ENCODE measurements at regions of chr2 and their contacts with region 1.

Region 1: DNA sequence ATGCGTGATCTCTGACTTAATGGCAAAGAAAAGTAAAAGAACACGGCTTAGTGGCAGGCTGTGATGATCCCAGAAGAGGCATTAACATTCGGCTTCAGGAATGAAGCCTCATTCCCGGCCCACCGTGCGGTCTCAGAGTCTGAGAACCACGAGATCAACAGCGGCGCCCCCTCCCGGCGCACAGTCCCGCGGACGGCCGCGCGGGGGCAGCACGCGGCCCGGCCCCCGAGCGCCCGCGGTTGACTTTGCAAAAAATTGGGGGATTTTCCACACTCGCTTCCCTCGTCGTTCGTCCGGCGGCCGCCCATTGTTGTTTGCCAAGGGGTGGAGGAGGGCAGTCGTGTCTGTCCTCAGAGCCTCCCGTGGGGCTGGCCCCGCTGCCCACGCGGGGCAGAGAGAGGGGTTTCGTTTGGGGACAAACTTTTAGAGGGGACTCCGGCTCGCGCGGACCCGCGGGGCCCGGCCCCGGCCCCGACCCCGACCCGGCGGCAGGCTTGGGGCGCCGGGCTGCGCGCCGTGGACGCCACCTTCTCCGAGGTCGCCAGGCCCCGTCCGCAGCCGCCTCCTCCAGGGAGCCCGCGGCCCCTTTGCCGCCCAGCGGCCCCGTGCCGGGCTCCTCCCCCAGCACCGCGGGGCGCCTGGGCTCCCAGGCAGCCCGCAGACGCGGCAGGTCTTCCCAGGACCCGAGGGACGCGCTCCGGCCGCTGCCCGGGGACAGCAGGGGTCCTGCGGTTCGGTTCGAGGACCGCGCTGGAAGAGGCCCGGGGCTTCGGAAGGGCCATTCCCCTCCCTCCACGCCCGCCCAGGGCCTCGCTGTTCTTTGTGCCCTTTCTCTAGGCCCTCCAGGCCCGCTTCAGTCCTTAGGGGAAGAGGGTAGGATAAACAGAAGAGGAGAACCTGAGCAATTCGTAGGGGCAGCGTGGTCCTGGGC is 3.4 kb upstream of the HS6ST1 start:
- DNase-seq: peak; percentile 79
- H3K4me3 Mint-ChIP-seq: peak overlapping the region; percentile 76
- H3K27ac Mint-ChIP-seq: peak overlapping the region; percentile 23
- H3K4me1 Mint-ChIP-seq: peaks cover 6% of the 10 kb centered on the region
- H3K27me3 Mint-ChIP-seq: peaks cover 6% of the 10 kb centered on the region

Region 2: DNA sequence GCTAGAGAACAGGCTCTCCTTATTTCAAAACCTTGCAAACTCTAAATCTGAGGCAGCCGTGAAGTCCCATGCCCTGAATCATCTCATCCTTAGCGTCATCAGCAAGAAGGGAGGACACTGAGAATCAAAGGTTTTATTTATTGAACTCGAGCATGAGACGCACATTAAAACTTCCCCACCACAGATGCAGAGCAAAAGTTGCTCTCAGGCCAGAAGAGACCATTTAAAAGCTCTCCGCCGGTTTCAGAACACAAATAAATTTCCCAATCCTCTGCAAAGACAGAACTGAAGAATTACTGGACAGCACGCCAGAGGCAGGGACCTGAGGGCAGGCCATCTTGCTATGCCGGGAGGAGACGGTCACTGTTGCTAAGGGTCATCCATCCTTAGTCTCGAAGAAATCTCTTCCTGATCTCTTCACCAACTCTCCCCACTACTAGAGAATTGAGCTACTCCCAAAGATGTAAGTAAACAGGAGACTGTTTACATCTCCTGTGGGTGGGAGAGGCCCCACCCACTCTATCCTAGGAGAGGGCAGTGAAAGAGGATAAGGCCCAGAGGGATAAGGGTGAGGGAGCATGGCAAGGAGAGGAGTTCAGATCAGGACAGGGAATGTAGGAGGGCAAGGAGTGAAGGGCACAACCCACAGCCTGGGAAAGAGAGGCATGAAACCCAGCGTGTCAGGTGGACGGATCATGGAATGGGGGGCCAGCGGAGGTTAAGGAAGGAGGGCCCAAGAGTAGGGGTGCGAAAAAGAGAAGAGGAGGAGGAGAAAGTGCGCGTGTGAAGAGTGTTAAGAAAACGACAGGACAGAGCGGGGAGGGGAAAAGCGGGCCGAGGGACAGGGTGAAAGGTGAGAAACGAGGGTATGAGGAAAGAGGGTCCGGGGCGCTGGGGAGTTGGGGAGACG is 437.4 kb before region 1 on chr2:
- intact Hi-C with region 1: loop called (anchors 10 kb)
- DNase-seq: no peak
- H3K4me3 Mint-ChIP-seq: peak overlapping the region; percentile 98
- H3K27ac Mint-ChIP-seq: peak overlapping the region; percentile 95
- H3K4me1 Mint-ChIP-seq: peaks cover 45% of the 10 kb centered on the region
- H3K27me3 Mint-ChIP-seq: no peaks in the 10 kb centered on the region

Region 3: DNA sequence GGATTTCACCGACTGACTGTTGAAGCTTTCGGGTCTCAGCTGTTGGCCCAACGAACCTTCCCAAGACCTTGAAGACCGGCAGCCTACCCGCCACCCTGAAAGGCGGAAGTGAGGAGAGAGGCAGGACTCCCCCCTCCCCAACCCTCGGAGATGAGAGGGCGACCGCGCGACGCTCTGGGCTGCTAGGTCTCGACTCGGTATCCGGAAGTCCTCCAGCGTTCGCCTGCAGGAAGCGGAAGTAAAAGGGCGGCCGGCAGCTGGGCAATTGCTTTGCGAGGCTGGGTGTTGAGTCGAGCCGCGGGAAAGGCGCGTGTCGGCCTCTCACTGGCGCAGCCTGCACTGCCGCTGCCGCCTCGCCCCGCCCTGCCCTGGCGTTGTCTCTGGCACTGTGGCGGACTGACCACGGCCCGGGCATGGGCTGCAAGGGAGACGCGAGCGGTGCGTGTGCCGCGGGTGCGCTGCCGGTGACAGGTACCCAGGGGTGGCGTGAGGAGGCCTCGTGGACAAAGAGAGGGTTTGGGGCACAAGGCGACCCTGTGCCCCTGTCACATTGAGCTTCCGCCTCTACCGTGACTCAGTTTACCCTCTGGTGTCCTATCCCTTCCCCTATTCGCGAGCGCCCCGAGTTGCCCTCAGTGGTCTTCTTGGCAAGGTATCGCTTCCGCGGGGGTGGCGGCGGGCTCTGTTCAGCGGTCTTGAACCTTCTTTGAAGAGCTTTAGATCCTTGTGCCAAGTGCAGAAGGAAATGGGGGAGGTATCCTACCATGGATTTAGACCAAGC is 230.9 kb before region 1 on chr2 and contains the start of gene UGGT1:
- intact Hi-C with region 1: loop called (anchors 1 kb)
- DNase-seq: peak; percentile 93
- H3K4me3 Mint-ChIP-seq: peak within 1 kb of the TSS; percentile 87
- H3K27ac Mint-ChIP-seq: peak within 1 kb of the TSS; percentile 85
- H3K4me1 Mint-ChIP-seq: peaks cover 38% of the 10 kb centered on the region
- H3K27me3 Mint-ChIP-seq: peaks cover 7% of the 10 kb centered on the region
- total RNA-seq, gene UGGT1: 65.2 and 70.7 TPM in 2 replicates

Region 4: GRCh38 chr2:128232965-128233789 is 88.9 kb before region 1 on chr2:
- intact Hi-C with region 1: loop called (anchors 5 kb)
- DNase-seq: peak; percentile 78
- H3K4me3 Mint-ChIP-seq: peak overlapping the region; percentile 82
- H3K27ac Mint-ChIP-seq: peak overlapping the region; percentile 52
- H3K4me1 Mint-ChIP-seq: peaks cover 5% of the 10 kb centered on the region
- H3K27me3 Mint-ChIP-seq: peaks cover 15% of the 10 kb centered on the region

Region 5: GRCh38 chr2:128520791-128521190 is 198.7 kb after region 1 on chr2:
- intact Hi-C with region 1: loop called (anchors 2 kb)
- DNase-seq: peak; percentile 57
- H3K4me3 Mint-ChIP-seq: no peak overlapping the region
- H3K27ac Mint-ChIP-seq: peak overlapping the region; percentile 48
- H3K4me1 Mint-ChIP-seq: peaks cover 23% of the 10 kb centered on the region
- H3K27me3 Mint-ChIP-seq: peaks cover 4% of the 10 kb centered on the region

Region 6: DNA sequence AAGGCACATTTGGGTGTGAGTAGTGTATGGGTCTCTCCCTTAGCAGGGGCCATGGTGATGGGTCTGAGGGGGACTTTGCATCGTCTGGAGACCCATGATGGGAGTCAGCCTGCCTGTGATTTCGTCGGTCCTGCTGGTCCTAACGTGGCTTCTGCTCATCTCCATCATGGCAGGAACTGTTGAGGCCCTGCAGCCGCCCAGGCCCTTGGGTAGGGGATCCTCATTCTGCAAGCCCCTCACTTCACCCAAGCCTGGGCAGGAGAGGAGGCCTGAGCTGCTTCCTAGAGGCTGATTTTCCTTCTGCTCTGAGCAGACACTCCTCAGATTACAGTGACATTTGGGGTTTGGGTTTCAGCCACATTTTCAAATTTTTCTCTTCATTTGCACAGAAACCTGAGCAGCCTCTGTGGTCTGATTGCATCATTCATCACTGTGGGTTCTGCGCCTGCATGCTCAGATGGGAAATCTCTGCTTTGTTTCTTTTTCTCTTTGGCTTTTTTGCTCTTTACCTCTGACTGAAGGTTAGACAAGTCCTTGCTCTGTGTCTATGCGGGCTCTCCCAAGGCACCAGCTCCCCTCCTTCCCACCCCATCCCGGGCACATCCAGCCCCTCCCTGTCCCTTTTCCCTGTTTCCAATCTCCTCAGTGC is 301.9 kb after region 1 on chr2:
- intact Hi-C with region 1: loop called (anchors 5 kb)
- DNase-seq: peak; percentile 40
- H3K4me3 Mint-ChIP-seq: peak overlapping the region; percentile 74
- H3K27ac Mint-ChIP-seq: peak overlapping the region; percentile 82
- H3K4me1 Mint-ChIP-seq: peaks cover 31% of the 10 kb centered on the region
- H3K27me3 Mint-ChIP-seq: peaks cover 25% of the 10 kb centered on the region

Region 7: DNA sequence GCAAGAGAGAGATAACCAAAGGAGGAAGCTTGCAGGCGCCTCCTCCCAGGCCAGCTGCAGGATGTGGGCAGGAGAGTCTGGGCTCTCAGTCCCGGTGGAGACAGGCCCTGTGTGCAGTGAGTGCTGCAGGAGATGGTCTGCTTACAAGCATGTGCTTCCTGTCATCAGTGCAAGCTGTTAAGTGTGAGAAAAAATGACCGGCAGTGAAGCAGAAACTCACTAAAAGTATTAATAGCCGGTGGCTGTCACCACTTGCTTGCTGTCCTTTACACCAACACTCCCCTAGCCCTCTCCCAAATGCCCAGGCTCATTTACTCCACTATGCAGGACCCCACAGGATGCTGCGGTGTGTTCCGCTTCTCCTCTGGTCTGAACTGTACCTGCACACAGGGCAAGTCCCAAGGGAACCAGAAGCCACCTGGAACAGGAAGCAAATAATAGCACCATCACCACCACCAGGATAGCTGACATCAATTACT is 432.2 kb after region 1 on chr2:
- intact Hi-C with region 1: loop called (anchors 2 kb)
- DNase-seq: peak; percentile 22
- H3K4me3 Mint-ChIP-seq: no peak overlapping the region
- H3K27ac Mint-ChIP-seq: no peak overlapping the region
- H3K4me1 Mint-ChIP-seq: peaks cover 17% of the 10 kb centered on the region
- H3K27me3 Mint-ChIP-seq: peaks cover 3% of the 10 kb centered on the region

Measured in activated T-helper 1 cell treated with anti-CD3 and anti-CD28 coated beads, Interleukin-12 subunit alpha, Interleukin-12 subunit beta, Interleukin-2, Interleukin-4 antibody, amounts not matched to agents 30 ng/mL and 10 ng/mL and 1 ng/mL, durations not matched to agents 14 hours and 24 hours and 36 hours (primary cell).